Activated T-helper 1 cell treated with anti-CD3 and anti-CD28 coated beads, Interleukin-12 subunit alpha, Interleukin-12 subunit beta, Interleukin-2, Interleukin-4 antibody, amounts not matched to agents 30 ng/mL and 10 ng/mL and 1 ng/mL, durations not matched to agents 14 hours and 24 hours and 36 hours (primary cell): ENCODE measurements at regions of chr5 and their contacts with region 1.

Region 1: DNA sequence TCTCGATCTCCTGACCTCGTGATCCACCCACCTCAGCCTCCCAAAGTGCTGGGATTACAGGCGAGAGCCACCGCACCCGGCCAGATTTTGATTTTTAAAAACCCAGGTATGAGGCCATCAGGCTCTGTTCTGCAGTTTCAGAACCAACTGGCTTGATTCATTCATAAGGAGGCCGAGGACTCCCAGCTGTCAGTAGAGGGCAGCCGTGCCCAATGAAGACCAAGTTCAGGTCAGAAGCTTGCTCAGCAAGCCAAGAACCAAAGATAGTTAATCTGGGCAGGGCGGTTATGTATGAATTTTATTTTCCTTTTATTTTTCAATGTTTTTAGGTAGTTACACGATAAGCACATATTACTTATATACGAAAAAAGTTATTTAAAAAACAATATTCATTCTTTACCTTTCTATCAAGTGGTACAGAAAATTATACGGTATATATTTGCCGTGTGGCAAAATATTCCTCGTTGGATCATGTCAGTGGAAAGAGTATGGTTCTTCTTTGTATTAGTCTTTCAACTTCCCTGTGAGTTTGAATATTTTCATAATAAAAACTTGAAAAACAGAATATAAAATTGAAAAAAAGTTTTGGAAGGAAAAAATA is 18.0 kb downstream of the MGAT1 start:
- DNase-seq: peak; percentile 47
- H3K4me3 Mint-ChIP-seq: no peak overlapping the region
- H3K27ac Mint-ChIP-seq: no peak overlapping the region
- H3K4me1 Mint-ChIP-seq: peaks cover 15% of the 10 kb centered on the region
- H3K27me3 Mint-ChIP-seq: no peaks in the 10 kb centered on the region

Region 2: DNA sequence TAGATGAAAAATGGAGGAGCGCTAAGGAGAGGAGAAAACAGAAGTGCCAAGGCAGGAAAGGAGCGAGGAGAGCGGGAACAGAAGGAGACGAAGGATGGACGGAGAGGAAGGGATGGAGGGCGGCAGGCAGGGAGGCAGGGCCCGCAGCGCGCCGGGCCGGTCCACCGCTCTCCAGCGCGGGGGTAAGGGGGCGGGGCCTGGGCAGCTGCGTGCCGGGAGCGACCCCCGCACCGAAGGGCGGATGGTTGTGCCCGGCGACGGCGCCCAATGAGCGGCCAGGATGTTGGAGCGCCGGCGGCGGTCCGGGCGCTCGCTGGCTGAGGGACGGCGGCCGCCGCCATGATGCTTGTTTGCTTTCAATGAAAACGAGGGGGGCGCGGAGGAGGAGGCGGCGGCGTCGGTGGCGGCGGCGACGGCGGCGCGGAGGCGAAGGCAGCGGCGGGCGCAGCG is 290.5 kb before region 1 on chr5 and contains the start of gene CNOT6:
- intact Hi-C with region 1: no loop called
- DNase-seq: peak; percentile 94
- H3K4me3 Mint-ChIP-seq: peak within 1 kb of the TSS; percentile 90
- H3K27ac Mint-ChIP-seq: peak within 1 kb of the TSS; percentile 93
- H3K4me1 Mint-ChIP-seq: peaks cover 37% of the 10 kb centered on the region
- H3K27me3 Mint-ChIP-seq: no peaks in the 10 kb centered on the region
- total RNA-seq, gene CNOT6: 48.8 and 49.7 TPM in 2 replicates

Region 3: GRCh38 chr5:180717989-180718388 is 66.6 kb before region 1 on chr5:
- intact Hi-C with region 1: no loop called
- DNase-seq: no peak
- H3K4me3 Mint-ChIP-seq: no peak overlapping the region
- H3K27ac Mint-ChIP-seq: no peak overlapping the region
- H3K4me1 Mint-ChIP-seq: peaks cover 10% of the 10 kb centered on the region
- H3K27me3 Mint-ChIP-seq: peaks cover 11% of the 10 kb centered on the region

Region 4: GRCh38 chr5:180868960-180869359 is 84.4 kb after region 1 on chr5:
- intact Hi-C with region 1: loop called (anchors 1 kb)
- DNase-seq: peak; percentile 32
- H3K4me3 Mint-ChIP-seq: no peak overlapping the region
- H3K27ac Mint-ChIP-seq: no peak overlapping the region
- H3K4me1 Mint-ChIP-seq: peaks cover 10% of the 10 kb centered on the region
- H3K27me3 Mint-ChIP-seq: peaks cover 22% of the 10 kb centered on the region